ENCODE measurements at regions of chr1 and their contacts with region 1.

Region 1: DNA sequence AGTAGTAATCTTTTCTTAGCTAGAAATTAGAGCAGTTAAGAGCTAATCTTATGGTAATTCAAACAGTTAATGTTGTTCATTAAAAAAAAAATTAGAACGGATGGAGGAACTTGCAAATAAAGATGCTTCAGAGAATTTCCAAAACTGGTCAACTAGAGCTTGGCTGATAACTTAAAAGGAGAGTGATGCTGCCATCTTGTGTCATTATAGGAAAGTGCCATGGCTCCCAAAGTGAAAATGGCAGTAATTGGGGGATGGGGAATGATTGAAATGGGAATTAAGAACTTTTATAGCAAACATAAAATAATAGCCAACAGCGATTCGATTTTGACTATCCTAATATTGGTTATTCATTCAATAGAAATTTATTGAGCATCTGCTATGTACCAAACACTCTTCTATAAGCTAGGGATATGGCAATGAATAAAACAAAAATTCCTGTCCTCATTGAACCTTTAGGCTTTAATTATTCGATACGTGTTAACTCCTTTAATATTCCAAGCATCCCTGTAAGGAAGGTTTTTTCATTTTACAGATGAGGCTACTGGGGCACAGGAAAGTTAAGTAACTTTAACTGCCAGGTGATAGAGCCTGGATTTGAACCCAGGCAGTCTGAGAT is 5.7 kb upstream of the PLPP3 start:
- DNase-seq: no peak
- ATAC-seq: peak; percentile 82
- H3K4me3 ChIP-seq: no peak overlapping the region
- H3K27ac ChIP-seq: no peak overlapping the region
- H3K4me1 ChIP-seq: no peaks in the 10 kb centered on the region
- H3K27me3 ChIP-seq: no peaks in the 10 kb centered on the region
- CTCF ChIP-seq: peak; percentile 88

Region 2: GRCh38 chr1:55284852-55285251 is 1300.2 kb before region 1 on chr1:
- intact Hi-C with region 1: loop called (anchors 10 kb)
- DNase-seq: no peak
- ATAC-seq: peak; percentile 52
- H3K4me3 ChIP-seq: no peak overlapping the region
- H3K27ac ChIP-seq: no peak overlapping the region
- H3K4me1 ChIP-seq: no peaks in the 10 kb centered on the region
- H3K27me3 ChIP-seq: no peaks in the 10 kb centered on the region
- CTCF ChIP-seq: peak; percentile 51

Region 3: GRCh38 chr1:55375617-55376258 is 1209.3 kb before region 1 on chr1:
- intact Hi-C with region 1: loop called (anchors 10 kb)
- DNase-seq: no peak
- ATAC-seq: peak; percentile 79
- H3K4me3 ChIP-seq: no peak overlapping the region
- H3K27ac ChIP-seq: no peak overlapping the region
- H3K4me1 ChIP-seq: no peaks in the 10 kb centered on the region
- H3K27me3 ChIP-seq: no peaks in the 10 kb centered on the region
- CTCF ChIP-seq: peak; percentile 95

Region 4: GRCh38 chr1:56477164-56478111 is 107.6 kb before region 1 on chr1:
- intact Hi-C with region 1: no loop called
- DNase-seq: peak; percentile 89
- ATAC-seq: peak; percentile 89
- H3K4me3 ChIP-seq: peak overlapping the region; percentile 57
- H3K27ac ChIP-seq: peak overlapping the region; percentile 92
- H3K4me1 ChIP-seq: peaks cover 11% of the 10 kb centered on the region
- H3K27me3 ChIP-seq: no peaks in the 10 kb centered on the region
- CTCF ChIP-seq: no peak

Region 5: DNA sequence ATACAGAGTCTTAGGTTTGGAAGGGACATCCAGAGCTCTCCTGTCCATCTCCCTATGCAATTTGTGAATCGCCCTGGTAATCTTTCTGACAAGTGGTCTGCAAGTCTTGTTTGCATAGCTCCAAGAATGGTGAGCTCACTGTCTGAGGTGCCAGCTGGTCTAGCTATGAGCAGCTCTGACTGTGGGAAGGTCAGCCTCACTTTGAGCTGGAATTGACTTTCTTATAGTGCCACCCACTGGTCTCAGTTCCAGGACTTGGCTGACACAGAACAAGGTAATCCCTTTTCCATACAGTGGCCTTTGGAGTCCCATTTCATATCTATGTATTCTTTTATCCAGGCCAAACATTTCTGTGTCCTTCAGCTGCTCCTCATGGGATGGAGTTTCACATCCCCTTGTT is 476.4 kb after region 1 on chr1:
- intact Hi-C with region 1: no loop called
- DNase-seq: no peak
- ATAC-seq: peak; percentile 28
- H3K4me3 ChIP-seq: no peak overlapping the region
- H3K27ac ChIP-seq: no peak overlapping the region
- H3K4me1 ChIP-seq: no peaks in the 10 kb centered on the region
- H3K27me3 ChIP-seq: no peaks in the 10 kb centered on the region
- CTCF ChIP-seq: no peak

Region 6: DNA sequence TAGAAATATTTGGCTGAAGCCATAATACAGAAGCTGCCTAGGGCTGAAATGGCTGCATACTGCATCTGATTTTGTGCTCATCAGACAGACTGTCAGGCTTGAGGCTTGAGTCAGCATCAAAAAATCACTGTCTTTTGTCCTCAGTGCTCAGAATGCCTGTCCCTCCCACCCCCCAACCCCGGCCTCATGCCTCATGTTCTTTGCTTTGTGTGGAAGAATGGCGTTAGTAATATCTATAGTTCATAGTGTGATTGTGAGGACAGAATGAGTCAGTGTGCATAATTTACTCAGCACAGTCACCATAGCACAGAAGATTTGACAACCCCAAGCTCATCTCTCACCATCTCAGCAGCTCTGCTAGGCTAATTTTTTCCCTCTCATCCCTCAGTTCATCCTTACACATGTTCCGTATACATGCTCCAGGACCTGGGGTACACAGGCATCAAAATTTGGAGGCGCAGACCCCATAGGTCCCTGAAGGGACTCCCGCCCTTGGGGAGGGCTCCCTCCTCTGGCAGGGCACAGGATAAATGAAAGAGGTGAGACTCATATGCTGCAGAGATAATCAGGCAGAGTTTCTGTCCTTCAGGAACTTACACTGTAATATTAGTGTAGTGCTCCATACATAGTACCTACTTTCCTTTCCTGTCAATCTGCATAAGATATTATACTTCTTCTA is 539.9 kb after region 1 on chr1:
- intact Hi-C with region 1: no loop called
- DNase-seq: no peak
- ATAC-seq: no peak
- H3K4me3 ChIP-seq: no peak overlapping the region
- H3K27ac ChIP-seq: no peak overlapping the region
- H3K4me1 ChIP-seq: no peaks in the 10 kb centered on the region
- H3K27me3 ChIP-seq: no peaks in the 10 kb centered on the region
- CTCF ChIP-seq: no peak

Measured in upper lobe of right lung (tissue), 1 donor.